ENCODE measurements at regions of chr21 and their contacts with region 1.

Region 1: GRCh38 chr21:36209626-36210171 is 53.1 kb downstream of the DOP1B start:
- DNase-seq: peak; percentile 52 to 71
- H3K4me3 ChIP-seq: peak overlapping the region; percentile 38; the same call in 1 of the 2 replicates
- H3K27ac ChIP-seq: peak overlapping the region; percentile 82
- H3K4me1 ChIP-seq: peaks cover 49% of the 10 kb centered on the region
- H3K27me3 ChIP-seq: no peaks in the 10 kb centered on the region
- CTCF ChIP-seq: peak; percentile 82

Region 2: GRCh38 chr21:36060159-36060921 is 149.4 kb before region 1 on chr21 and contains the start of gene SETD4:
- CTCF ChIA-PET with region 1: interaction called, 4 read pairs
- POLR2A ChIA-PET with region 1: no interaction called
- intact Hi-C with region 1: loop called (anchors 5 kb)
- DNase-seq: peak; percentile 86 to 91
- H3K4me3 ChIP-seq: peak within 1 kb of the TSS; percentile 96
- H3K27ac ChIP-seq: peak within 1 kb of the TSS; percentile 81
- H3K4me1 ChIP-seq: peaks cover 16% of the 10 kb centered on the region
- H3K27me3 ChIP-seq: no peaks in the 10 kb centered on the region
- CTCF ChIP-seq: no peak
- total RNA-seq, gene SETD4: 24.2 and 27.3 TPM in 2 replicates

Region 3: GRCh38 chr21:36141513-36141925 is 68.2 kb before region 1 on chr21:
- CTCF ChIA-PET with region 1: no interaction called
- POLR2A ChIA-PET with region 1: no interaction called
- intact Hi-C with region 1: loop called (anchors 1 kb)
- DNase-seq: peak; percentile 91 to 96
- H3K4me3 ChIP-seq: no peak overlapping the region
- H3K27ac ChIP-seq: peak overlapping the region; percentile 66
- H3K4me1 ChIP-seq: peaks cover 9% of the 10 kb centered on the region
- H3K27me3 ChIP-seq: no peaks in the 10 kb centered on the region
- CTCF ChIP-seq: peak; percentile 81

Region 4: GRCh38 chr21:36156339-36156814 is 53.3 kb before region 1 on chr21:
- CTCF ChIA-PET with region 1: interaction called, 4 read pairs
- POLR2A ChIA-PET with region 1: interaction called, 6 read pairs
- intact Hi-C with region 1: loop called (anchors 1 kb)
- DNase-seq: peak; percentile 83 to 97
- H3K4me3 ChIP-seq: peak overlapping the region; percentile 69
- H3K27ac ChIP-seq: peak overlapping the region; percentile 63; the same call in 1 of the 2 replicates
- H3K4me1 ChIP-seq: peaks cover 15% of the 10 kb centered on the region
- H3K27me3 ChIP-seq: no peaks in the 10 kb centered on the region
- CTCF ChIP-seq: no peak

Region 5: GRCh38 chr21:36188081-36188681 is 21.5 kb before region 1 on chr21:
- CTCF ChIA-PET with region 1: no interaction called
- POLR2A ChIA-PET with region 1: no interaction called
- intact Hi-C with region 1: loop called (anchors 1 kb)
- DNase-seq: peak; percentile 81 to 93
- H3K4me3 ChIP-seq: peak overlapping the region; percentile 37; the same call in 1 of the 2 replicates
- H3K27ac ChIP-seq: peak overlapping the region; percentile 60
- H3K4me1 ChIP-seq: peaks cover 50% of the 10 kb centered on the region
- H3K27me3 ChIP-seq: no peaks in the 10 kb centered on the region
- CTCF ChIP-seq: no peak

Region 6: GRCh38 chr21:36235058-36235582 is 25.4 kb after region 1 on chr21:
- CTCF ChIA-PET with region 1: no interaction called
- POLR2A ChIA-PET with region 1: no interaction called
- intact Hi-C with region 1: no loop called
- DNase-seq: peak; percentile 41 to 78
- H3K4me3 ChIP-seq: no peak overlapping the region
- H3K27ac ChIP-seq: no peak overlapping the region
- H3K4me1 ChIP-seq: peaks cover 18% of the 10 kb centered on the region
- H3K27me3 ChIP-seq: no peaks in the 10 kb centered on the region
- CTCF ChIP-seq: no peak

Region 7: DNA sequence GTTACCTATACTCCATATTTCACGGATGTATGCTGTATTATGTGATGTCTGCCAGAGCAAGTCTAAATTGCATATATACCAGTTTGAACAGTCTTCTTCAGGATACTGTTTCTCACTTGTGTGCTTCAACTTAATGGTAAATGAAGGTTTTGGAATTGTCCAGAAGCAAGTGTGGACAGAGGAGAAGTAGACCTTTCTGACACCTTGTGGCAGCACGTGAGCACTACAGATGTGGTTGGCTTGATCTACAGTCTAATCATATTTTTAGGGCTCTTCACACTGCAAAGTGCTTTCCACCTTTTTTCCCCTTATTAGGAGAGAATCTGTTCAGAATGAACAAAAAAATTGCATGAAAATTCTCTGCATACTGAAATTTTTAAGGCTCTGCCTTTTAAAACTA is 121.2 kb after region 1 on chr21:
- CTCF ChIA-PET with region 1: no interaction called
- POLR2A ChIA-PET with region 1: interaction called, 6 read pairs
- intact Hi-C with region 1: loop called (anchors 1 kb)
- DNase-seq: peak; percentile 32 to 40
- H3K4me3 ChIP-seq: no peak overlapping the region
- H3K27ac ChIP-seq: no peak overlapping the region
- H3K4me1 ChIP-seq: no peaks in the 10 kb centered on the region
- H3K27me3 ChIP-seq: no peaks in the 10 kb centered on the region
- CTCF ChIP-seq: peak; percentile 72